ENCODE measurements at regions of chr1 and their contacts with region 1.

Region 1: DNA sequence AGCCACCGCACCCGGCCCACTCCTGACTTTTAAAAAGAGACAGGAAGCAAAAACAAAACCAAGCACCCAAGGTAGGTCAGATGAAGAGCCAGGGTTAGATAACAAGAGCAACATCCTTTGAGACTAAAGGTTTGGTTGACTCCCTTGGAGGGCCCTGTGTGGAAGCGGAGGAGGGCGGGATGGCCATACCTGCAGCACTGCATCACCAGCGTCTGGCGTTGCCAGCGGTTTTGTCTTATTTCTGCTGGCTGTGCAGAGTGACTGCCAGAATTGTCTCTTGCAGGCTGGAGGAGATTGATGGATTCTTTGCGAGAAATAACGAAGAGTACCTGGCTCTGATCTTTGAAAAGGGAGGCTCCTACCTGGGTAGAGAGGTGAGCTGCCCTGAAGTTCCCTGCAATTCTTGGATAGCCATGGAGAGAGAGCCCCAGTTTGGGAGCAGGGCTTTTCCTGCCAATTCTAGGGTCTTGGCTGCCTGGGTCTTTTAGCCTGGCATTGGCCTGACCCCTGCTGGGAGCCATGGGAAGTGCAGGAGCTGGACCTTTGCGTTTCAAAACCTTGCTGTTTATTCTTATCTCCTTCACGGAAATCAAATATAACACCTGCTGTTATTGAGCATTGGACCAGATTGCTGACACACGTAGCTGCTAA is 24.0 kb downstream of the QSOX1 start:
- DNase-seq: no peak
- H3K4me3 ChIP-seq: no peak overlapping the region
- H3K27ac ChIP-seq: no peak overlapping the region
- H3K27me3 ChIP-seq: no peaks in the 10 kb centered on the region
- CTCF ChIP-seq: peak; percentile 93

Region 2: DNA sequence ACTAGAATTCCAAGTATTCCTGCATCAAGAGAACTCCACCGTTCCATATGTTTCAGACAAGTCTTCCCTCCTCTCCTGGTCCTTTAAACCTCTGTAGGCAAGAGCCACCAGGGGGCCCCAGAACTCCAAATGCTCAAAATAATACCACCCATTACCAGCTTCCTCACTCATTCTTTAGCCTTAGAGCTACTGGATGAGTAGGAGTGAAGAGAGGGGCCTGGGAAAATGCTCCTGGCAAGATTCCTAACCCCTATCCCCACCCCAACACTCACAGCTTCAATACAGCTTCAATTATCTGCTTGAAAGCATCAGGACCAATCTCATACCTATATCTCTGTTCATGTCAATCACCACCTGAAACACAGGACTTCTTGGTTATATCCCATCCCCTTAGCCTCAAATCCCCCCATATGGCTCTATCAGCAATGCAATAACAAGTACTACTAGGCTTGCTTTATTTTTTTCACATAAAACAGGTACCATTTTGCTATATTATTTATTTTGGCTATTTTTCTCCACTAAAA is 310.8 kb before region 1 on chr1:
- CTCF ChIA-PET with region 1: interaction called, 42 read pairs
- POLR2A ChIA-PET with region 1: no interaction called
- DNase-seq: no peak
- H3K4me3 ChIP-seq: no peak overlapping the region
- H3K27ac ChIP-seq: no peak overlapping the region
- H3K27me3 ChIP-seq: no peaks in the 10 kb centered on the region
- CTCF ChIP-seq: peak; percentile 84

Region 3: DNA sequence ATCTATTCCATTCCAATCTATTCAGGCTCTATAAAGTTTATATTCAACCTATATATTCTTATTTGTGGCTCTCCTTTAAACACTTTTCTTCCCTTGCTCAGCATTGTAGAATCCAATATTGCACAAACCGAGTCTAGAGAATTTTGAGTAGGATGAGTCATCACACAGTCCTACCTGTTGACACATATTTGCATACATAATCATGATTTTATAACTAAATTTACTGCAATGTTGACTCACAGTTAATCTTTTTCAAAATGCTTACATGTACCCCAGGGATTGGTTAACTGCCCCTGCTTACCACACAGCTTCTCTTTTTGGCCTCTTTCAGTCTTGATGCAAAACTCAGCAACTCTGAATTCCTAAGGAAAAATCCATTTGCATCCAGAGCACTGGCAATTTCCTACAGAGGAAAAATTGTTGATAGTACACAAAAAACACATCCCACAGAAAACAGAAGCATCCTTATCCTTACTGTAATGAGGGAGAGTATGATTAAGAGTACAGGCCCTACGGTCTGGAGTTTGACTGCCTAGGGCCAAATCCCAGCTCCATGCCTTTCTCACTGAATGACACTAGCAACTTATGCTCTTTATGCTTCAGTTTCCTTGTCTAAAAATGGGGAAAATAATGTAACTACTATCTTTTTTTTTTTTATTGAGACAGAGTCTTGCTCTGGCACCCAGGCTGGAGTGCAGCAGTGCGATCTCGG is 252.0 kb before region 1 on chr1:
- CTCF ChIA-PET with region 1: no interaction called
- POLR2A ChIA-PET with region 1: no interaction called
- DNase-seq: peak; percentile 13
- H3K4me3 ChIP-seq: no peak overlapping the region
- H3K27ac ChIP-seq: peak overlapping the region; percentile 22
- H3K27me3 ChIP-seq: no peaks in the 10 kb centered on the region
- CTCF ChIP-seq: no peak

Region 4: DNA sequence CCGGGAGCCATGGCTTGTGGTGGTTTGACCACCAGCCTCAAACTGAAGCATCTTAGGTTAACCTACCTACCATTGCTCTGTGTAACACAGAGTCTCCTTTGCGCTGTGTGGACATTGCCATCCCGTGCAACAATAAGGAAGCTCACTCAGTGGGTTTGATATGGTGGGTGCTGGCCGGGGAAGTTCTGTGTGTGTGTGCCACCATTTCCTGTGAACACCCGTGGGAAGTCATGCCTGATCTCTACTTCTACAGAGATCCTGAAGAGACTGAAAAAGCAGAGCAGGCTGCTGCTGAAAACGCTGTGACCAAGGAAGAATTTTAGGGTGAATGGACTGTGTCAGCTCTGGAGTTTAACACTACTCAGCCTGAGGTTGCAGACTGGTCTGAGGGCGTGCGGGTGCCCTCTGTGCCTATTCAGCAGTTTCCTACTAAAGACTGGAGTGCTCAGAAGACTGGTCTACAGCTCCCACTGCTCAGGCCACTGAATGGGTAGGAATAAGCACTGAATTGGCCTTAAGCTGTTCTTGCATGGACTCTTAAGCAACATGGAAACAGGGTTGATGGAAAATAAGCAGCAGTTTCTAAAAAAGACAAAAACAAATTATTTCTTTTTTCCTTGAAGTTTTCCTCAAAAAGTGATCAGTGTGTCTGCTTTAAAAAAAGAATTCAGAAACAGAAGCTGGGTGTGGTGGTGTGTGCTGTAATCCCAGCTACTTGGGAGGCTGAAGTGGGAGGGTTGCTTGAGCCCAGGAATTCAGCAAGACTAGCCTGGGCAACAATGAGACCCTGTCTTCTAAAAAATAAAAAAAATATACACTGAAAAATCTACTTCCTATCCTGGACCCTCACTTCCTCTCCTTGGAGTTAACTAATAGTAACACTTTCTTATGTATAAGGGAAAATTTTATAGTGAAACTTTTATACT is 209.4 kb before region 1 on chr1:
- CTCF ChIA-PET with region 1: no interaction called
- POLR2A ChIA-PET with region 1: no interaction called
- DNase-seq: no peak
- H3K4me3 ChIP-seq: no peak overlapping the region
- H3K27ac ChIP-seq: no peak overlapping the region
- H3K27me3 ChIP-seq: no peaks in the 10 kb centered on the region
- CTCF ChIP-seq: no peak

Region 5: DNA sequence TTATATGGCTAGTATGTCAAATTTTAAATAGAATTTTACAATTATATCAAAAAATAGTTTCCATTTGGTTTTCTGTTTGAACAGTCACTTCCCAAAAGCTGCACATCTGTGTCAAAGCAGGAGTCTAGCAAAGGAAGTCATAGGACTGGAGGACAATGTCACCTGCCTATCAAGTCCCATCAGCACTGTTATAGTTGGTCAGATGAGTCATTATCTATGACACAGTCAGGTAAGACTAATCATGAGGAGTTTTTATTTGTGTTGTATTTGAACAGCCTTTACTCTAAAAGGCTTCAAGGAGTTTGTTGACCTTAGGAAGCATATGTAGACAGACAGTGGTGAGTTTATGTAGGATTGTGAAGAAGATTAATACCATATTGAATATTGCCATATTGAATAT is 98.2 kb before region 1 on chr1:
- CTCF ChIA-PET with region 1: interaction called, 12 read pairs
- POLR2A ChIA-PET with region 1: no interaction called
- DNase-seq: no peak
- H3K4me3 ChIP-seq: no peak overlapping the region
- H3K27ac ChIP-seq: no peak overlapping the region
- H3K27me3 ChIP-seq: no peaks in the 10 kb centered on the region
- CTCF ChIP-seq: no peak

Region 6: DNA sequence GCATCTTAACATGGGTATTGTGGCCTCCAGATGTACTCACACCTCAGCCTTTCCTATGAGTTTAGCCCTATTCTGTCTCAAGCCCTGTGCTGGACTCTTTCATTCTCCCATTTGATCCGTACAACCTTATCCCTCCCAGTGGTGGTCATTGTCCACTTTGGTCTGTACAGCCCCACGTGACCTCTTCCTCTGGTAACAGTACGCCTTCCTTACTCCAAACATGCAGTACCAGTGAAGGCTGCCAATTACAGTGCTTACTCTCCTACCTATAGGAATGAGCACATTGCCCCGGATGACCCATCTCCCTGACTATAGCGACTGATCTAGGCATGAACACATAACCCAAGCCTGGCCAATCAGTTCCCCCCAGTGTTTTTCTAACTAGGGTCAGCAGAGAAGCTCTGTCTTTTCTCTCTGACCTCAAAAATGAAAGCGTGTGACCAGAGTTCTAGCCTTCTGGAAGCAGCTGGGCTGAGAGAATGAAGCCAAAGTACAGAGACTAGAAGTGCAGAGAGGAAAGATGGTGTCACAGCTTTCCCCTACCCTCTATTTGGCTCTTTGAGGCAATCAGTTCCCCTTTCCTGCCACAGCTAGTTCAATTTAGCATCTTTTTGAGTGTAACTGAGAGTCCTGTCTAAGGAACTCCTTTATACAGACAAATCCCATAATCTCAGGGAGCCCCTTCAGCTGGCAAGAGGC is 33.8 kb before region 1 on chr1:
- CTCF ChIA-PET with region 1: no interaction called
- POLR2A ChIA-PET with region 1: no interaction called
- DNase-seq: no peak
- H3K4me3 ChIP-seq: no peak overlapping the region
- H3K27ac ChIP-seq: peak overlapping the region; percentile 34
- H3K27me3 ChIP-seq: no peaks in the 10 kb centered on the region
- CTCF ChIP-seq: no peak

Region 7: DNA sequence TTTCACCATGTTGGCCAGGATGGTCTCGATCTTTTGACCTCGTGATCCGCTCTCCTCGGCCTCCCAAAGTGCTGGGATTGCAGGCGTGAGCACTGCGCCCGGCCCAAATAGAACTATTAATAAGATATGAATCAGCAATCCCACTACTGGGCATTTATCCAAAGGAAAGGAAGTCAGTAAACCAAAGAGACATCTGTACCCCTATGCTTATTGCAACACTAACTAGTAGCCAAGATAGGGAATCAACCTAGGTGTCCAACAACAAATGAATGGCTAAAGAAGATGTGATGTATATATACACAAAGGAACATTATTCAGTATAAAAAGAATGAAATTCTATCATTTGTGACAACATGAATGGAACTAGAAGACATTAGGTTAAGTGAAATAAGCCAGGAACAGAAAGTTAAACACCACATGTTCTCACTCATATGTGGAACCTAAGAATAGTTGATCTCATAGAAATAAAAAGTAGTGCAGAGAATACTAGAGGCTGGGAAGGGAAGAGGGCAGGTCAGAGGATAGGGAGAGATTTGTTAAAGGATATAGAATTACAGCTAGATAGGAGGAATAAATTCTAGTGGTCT is 502.0 kb after region 1 on chr1:
- CTCF ChIA-PET with region 1: no interaction called
- POLR2A ChIA-PET with region 1: no interaction called
- DNase-seq: peak; percentile 39
- H3K4me3 ChIP-seq: no peak overlapping the region
- H3K27ac ChIP-seq: no peak overlapping the region
- H3K27me3 ChIP-seq: no peaks in the 10 kb centered on the region
- CTCF ChIP-seq: no peak